BJ (cell line): ENCODE measurements at regions of chr9 and their contacts with region 1.

Region 1: DNA sequence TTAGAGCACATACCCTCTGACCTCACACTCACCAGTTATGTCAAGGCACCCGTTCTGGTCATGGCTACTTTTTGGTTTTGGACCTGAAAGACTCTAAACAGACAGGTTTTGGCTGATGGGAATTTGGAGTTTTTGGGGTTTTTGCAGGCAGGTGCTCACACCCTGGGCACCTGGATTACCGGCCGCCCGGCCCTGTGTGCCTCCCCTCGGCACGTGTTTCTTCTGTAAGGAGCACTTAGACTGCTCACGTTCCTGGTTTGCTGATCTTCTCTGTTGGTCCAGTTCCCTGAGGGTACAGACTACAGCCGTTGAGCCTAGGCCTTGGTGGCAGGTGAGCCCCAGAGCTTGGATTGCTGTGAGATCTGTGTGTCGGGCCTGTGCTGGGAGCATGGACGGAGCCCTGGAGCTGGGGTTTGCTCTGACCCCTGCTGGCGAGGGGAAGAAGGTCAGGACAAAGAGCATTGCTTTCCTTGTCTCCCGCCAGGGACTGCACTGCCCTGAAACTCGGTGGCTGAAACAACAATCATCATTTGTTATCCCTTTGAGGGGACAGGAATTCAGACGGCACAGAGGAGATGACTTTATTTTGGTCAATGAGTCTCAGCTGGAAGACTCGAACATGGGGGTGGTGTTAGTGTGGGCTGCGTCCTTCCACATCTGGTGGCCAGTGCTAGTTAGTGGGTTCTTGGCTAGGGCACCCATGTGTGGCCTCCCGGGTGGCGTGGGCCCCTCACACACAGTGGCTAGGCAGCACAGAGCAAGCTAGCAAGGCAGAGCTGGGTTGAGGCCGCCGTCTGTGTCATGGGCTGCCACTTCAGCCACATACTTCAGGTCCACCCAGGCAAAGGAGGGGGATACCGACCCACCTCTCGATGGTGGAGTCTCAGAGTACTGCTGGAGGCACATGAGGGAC is 76.4 kb downstream of the EHMT1 start:
- DNase-seq: no peak
- H3K4me3 ChIP-seq: no peak overlapping the region
- H3K27me3 ChIP-seq: no peaks in the 10 kb centered on the region
- CTCF ChIP-seq: peak; percentile 78

Region 2: DNA sequence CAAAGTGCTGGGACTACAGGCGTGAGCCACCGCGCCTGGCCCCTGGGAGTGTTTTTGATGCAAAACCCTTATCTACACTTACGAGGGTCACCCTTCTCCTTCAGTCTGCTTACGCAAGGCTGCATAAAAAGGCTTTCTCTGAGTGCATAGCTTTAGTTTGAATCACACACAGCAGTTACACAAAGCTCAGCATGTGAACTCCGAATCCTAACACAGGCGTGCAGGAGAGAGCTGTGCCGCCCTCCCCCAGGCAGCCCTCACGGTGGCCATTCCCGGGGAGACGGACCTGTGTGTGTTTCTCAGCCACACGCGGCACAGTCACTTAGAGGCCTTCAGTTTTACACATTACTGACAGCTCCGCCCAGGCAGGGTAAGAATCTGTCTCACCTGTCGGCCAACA is 299.0 kb before region 1 on chr9:
- CTCF ChIA-PET with region 1: no interaction called
- POLR2A ChIA-PET with region 1: no interaction called
- DNase-seq: peak; percentile 17
- H3K4me3 ChIP-seq: no peak overlapping the region
- H3K27me3 ChIP-seq: no peaks in the 10 kb centered on the region
- CTCF ChIP-seq: no peak

Region 3: GRCh38 chr9:137672907-137673791 is 22.1 kb before region 1 on chr9:
- CTCF ChIA-PET with region 1: interaction called, 23 read pairs
- POLR2A ChIA-PET with region 1: no interaction called
- DNase-seq: no peak
- H3K4me3 ChIP-seq: no peak overlapping the region
- H3K27me3 ChIP-seq: no peaks in the 10 kb centered on the region
- CTCF ChIP-seq: peak; percentile 87

Region 4: DNA sequence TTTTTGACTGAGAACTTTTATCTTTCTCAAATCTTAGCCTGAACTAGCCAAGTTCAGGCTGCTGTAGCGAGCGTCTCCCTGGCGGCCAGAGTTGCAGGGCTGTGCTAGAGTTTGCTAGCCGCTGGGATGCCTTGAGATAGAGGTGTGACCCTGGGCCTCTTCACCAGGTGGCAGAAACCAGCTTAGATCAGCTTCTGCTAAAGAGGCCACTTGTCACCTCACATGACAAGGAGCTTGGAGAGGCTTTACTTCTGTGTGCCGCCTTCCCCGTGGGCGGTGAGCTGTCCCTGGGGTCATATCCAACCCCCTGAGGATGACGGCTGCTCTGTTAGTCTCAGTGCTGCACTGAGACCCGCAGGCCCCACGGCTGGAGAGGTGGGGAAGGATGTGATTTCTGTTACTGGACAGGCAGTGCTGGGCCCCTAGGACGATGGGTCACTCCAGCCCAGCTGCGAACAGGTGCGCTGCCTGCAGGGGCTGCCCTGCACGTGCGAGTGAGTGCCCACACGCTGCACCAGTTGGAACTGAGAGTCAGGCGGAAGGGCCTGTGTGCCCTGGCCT is 12.7 kb before region 1 on chr9:
- CTCF ChIA-PET with region 1: interaction called, 16 read pairs
- POLR2A ChIA-PET with region 1: no interaction called
- DNase-seq: no peak
- H3K4me3 ChIP-seq: no peak overlapping the region
- H3K27me3 ChIP-seq: no peaks in the 10 kb centered on the region
- CTCF ChIP-seq: no peak

Region 5: DNA sequence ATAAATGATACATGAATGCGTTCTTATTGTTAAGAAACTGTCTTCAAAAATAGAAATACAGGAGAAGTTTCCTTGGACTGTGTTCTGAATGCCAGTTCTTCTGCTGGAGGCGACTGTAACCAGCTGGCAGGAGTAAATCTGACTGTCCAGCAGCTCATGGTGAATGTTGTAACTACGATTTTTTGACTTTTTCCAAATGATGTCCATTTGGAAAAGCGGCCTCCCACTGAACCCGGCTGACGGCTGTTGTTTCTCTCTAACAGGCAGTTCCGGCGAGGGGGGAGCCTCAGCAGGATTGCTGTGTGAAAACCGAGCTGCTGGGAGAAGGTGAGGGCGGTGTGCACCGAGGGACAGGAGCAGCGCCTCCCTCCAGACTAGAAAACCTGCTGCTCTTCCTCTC is 15.5 kb after region 1 on chr9:
- CTCF ChIA-PET with region 1: interaction called, 11 read pairs
- POLR2A ChIA-PET with region 1: no interaction called
- DNase-seq: no peak
- H3K4me3 ChIP-seq: no peak overlapping the region
- H3K27me3 ChIP-seq: no peaks in the 10 kb centered on the region
- CTCF ChIP-seq: no peak